WTC11 (cell line): ENCODE measurements at regions of chr11 and their contacts with region 1.

Region 1: DNA sequence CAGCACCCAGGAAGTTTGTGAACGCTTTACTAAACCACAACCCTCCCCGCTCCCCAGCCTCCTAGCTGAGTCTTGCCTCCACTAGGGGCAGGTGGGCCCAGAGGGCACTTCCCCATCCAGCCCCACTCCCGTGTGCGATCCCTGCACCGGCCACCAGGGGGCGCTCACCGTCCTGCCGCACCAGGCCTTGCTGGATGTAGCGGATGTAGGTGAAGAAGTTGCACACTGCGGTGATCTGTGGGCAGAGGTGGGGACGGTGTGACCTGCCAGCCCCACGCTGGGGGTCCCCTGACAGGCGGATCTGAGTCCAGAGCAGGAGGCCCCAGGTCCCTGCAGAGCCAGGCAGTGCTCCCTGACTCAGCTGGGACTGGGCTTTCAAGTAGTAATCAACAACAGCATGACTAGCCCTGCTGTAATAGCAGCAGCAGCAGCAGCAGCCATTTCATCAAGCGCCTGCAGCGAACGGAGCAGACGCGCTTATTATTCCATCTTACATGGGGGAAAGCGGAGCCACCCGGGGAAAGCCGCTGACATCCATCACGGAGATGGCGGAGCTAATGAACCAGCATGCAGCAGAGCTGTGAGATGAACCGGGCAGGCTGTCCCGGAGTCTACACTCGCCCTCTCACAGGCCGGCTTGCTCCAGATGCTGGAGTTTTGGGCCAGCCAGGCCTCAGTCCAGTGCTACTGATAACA is 7.9 kb upstream of the FADS3 start:
- DNase-seq: peak; percentile 98
- ATAC-seq: peak; percentile 80
- H3K4me3 Mint-ChIP-seq: no peak overlapping the region
- H3K27ac Mint-ChIP-seq: no peak overlapping the region
- H3K4me1 Mint-ChIP-seq: peaks cover 20% of the 10 kb centered on the region
- H3K27me3 Mint-ChIP-seq: no peaks in the 10 kb centered on the region
- CTCF ChIP-seq: peak; percentile 100

Region 2: GRCh38 chr11:61871158-61871597 is 28.1 kb before region 1 on chr11:
- CTCF ChIA-PET with region 1: interaction called, 118 read pairs
- POLR2A ChIA-PET with region 1: no interaction called
- DNase-seq: peak; percentile 92
- ATAC-seq: peak; percentile 87
- H3K4me3 Mint-ChIP-seq: peak overlapping the region; percentile 50
- H3K27ac Mint-ChIP-seq: no peak overlapping the region
- H3K4me1 Mint-ChIP-seq: peaks cover 18% of the 10 kb centered on the region
- H3K27me3 Mint-ChIP-seq: peaks cover 9% of the 10 kb centered on the region
- CTCF ChIP-seq: peak; percentile 87

Region 3: DNA sequence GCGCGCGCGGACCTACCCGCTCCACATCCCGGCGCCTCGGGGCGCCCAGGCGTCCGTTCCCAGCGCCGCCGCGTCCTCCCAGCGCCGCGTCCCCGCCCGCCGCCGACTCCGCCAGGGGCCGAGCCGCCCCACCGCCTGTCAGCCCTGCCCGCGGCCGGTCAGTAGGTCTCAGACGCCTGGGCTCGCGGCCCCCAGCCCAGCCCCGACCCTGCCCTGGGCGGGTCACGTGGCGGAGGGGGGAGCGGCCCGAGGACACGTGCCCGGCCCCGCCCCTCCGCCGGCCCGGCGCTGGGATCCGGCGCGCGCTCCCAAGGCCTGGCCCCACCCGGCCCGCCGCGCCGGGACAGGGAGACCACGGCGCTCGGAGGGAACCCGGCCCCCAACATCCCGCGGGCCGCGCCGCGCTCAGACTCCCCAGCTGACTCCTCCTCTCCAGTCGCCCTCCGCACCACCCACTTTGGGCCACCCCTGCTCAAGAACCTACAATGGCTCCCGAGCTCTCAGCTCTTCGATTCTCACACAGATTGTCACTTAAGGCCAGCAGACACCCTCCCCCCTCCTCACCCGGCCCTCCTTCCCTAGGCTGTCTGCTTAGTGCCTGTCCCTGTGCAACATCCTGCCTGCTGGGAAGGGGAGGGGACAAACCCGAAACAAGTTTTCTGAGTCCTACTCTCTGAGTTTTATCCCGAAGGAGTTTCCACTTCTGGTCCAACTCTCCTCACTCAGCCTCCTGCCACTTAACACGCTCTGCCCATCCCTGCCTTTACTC is 18.2 kb after region 1 on chr11 and contains the start of gene RAB3IL1:
- CTCF ChIA-PET with region 1: interaction called, 95 read pairs
- POLR2A ChIA-PET with region 1: no interaction called
- DNase-seq: peak; percentile 59
- ATAC-seq: peak; percentile 79
- H3K4me3 Mint-ChIP-seq: peak within 1 kb of the TSS; percentile 75
- H3K27ac Mint-ChIP-seq: no peak within 1 kb of the TSS
- H3K4me1 Mint-ChIP-seq: peaks cover 18% of the 10 kb centered on the region
- H3K27me3 Mint-ChIP-seq: peaks cover 38% of the 10 kb centered on the region
- CTCF ChIP-seq: no peak
- total RNA-seq, gene RAB3IL1: 7.2 to 11.1 TPM (median 8.9 TPM) in 3 replicates

Region 4: GRCh38 chr11:61947486-61948210 is 48.4 kb after region 1 on chr11:
- CTCF ChIA-PET with region 1: interaction called, 685 read pairs
- POLR2A ChIA-PET with region 1: interaction called, 26 read pairs
- DNase-seq: peak; percentile 89
- ATAC-seq: peak; percentile 93
- H3K4me3 Mint-ChIP-seq: no peak overlapping the region
- H3K27ac Mint-ChIP-seq: no peak overlapping the region
- H3K4me1 Mint-ChIP-seq: peaks cover 7% of the 10 kb centered on the region
- H3K27me3 Mint-ChIP-seq: peaks cover 3% of the 10 kb centered on the region
- CTCF ChIP-seq: peak; percentile 83

Region 5: DNA sequence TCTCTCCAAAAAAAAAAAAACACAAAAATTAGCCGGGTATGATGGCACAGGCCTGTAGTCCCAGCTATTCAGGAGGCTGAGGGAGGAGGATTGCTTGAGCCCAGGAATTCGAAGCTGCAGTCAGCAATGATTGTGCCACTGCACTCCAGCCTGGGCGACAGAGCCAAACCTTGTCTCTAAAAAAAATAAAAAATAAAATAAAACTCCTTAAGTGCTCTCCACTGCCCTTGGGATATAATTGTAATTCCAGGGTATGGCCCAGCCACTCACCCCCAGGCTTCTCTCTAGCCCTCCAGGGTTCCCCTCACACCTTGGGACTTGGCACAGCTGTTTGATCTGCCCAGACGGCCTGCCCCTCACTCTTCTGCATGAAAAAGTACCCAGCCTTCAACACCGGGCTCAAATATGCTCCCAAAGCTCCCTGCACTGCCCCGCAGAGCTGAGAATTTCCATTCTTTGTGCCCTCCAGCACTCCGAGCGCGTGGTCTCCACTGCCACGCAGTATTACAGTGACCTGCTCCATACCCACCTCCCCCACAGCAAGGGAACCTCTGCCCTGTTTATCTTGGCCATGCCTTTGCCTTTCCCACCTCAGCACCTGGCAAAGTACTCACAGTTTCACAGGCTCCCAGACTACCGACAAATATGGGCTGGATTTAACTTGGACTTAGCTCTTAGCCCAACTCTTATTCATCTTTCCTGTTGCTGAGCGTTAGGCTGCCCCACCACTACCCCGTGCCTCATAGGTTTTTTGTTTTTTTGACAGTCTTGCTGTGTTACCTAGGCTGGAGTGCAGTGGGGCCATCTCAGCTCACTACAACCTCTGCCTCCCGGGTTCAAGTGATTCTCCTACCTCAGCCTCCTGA is 75.7 kb after region 1 on chr11:
- CTCF ChIA-PET with region 1: interaction called, 14 read pairs
- POLR2A ChIA-PET with region 1: no interaction called
- DNase-seq: no peak
- ATAC-seq: no peak
- H3K4me3 Mint-ChIP-seq: no peak overlapping the region
- H3K27ac Mint-ChIP-seq: peak overlapping the region; percentile 66
- H3K4me1 Mint-ChIP-seq: peaks cover 36% of the 10 kb centered on the region
- H3K27me3 Mint-ChIP-seq: peaks cover 4% of the 10 kb centered on the region
- CTCF ChIP-seq: no peak

Region 6: DNA sequence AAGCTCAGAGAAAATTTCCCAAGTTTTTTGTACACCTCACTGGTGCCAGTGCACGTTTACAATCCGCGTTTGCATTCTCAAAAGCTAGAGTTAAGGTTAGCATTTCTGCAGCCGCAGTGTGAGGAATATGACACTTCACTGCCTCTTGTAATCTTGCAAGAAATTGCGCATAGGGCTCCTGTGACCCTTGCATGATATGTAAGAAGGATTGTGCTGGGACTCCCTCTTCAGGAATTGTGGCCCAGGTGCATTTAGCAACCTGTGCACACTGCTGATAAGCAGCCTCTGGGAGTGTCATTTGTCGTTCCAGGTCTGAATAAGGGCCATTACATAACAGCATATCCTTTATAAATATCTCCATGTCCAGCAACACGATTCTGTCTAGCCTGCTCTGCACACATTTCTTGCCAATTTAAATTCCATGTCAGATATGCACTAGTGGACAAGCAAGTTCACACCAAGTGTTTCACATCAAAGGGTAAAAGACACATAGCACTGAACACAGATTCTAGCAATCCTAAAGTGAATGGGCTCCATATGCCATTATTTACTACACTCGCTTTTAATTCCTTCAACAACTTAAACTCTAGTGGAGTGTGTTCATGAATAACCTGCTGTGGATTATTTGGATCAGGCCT is 155.3 kb after region 1 on chr11:
- CTCF ChIA-PET with region 1: interaction called, 15 read pairs
- POLR2A ChIA-PET with region 1: no interaction called
- DNase-seq: peak; percentile 14
- ATAC-seq: no peak
- H3K4me3 Mint-ChIP-seq: no peak overlapping the region
- H3K27ac Mint-ChIP-seq: no peak overlapping the region
- H3K4me1 Mint-ChIP-seq: no peaks in the 10 kb centered on the region
- H3K27me3 Mint-ChIP-seq: peaks cover 6% of the 10 kb centered on the region; the same call in 1 of the 2 replicates
- CTCF ChIP-seq: no peak

Region 7: DNA sequence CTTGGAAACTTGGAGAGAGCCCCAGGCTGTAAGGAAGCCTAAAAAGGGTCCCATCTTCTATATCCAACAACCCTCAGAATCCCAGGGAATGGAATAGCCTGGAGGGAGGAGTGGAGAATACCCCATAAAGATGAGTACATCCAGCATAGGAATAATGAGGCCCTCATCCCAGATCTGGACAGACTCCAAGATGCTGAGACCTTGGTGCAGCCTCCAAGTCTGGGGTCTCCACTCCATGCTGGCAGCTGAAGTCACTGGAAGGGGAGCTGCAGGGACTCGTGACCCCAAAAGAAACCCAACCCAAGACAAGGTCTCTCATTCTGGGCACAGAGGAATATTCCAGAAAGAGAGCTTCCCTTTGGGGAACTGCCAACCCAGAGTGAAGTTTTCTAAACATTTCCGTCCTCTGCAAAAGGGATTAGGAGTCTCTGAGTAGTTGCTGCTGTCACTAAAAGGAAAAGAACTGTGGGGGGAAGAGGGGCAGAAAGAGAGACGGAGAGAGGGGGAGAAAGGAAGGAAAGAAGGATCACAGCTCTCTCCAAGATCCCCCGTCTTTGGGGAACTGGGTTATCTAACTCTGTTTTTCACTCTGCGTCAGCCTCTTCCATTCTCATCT is 520.1 kb after region 1 on chr11:
- CTCF ChIA-PET with region 1: no interaction called
- POLR2A ChIA-PET with region 1: no interaction called
- DNase-seq: no peak
- ATAC-seq: no peak
- H3K4me3 Mint-ChIP-seq: no peak overlapping the region
- H3K27ac Mint-ChIP-seq: no peak overlapping the region
- H3K4me1 Mint-ChIP-seq: no peaks in the 10 kb centered on the region
- H3K27me3 Mint-ChIP-seq: peaks cover 38% of the 10 kb centered on the region
- CTCF ChIP-seq: no peak